ENCODE measurements at regions of chr2 and their contacts with region 1.

Region 1: DNA sequence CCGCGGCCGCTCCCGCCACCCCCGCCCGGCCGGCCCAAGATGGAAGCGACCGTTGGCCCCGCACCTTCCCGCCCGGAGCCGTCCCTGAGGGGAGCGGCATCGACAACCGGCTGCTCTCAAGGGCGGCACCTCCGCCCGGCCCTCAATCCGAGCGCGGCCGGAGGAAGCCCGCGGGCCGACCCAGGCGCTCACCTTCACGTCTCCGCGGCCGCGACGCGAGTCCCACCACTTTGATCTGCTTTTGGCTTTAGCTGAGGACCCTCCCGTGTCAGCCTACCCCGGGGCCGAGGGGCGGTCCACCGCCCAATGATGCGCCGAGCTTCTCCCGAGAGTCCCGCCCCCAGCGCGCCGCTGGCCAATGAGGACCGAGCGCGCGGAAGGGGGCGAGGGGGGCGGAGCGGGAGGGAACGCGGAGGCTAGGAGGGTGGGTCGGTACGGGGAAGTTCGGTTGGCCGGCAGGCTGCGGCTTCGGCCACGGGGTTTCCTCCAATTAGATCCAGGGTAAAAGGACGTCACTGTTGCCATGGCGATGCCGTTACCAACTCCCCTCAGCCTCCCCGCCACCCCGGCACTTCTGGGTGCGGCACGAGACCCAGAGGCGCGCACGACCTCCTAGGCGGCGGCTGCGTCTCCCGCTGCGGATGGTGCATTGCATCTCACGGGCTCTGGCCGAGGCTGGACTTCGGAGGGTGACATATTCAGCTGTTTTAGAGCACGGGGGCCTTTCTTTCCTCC is at the start of gene YWHAQ:
- DNase-seq: peak; percentile 97
- H3K4me3 Mint-ChIP-seq: peak within 1 kb of the TSS; percentile 97
- H3K27ac Mint-ChIP-seq: peak within 1 kb of the TSS; percentile 85
- H3K4me1 Mint-ChIP-seq: peaks cover 24% of the 10 kb centered on the region
- H3K27me3 Mint-ChIP-seq: no peaks in the 10 kb centered on the region
- CTCF ChIP-seq: no peak
- total RNA-seq, gene YWHAQ: 239 TPM in 2 replicates

Region 2: GRCh38 chr2:9440058-9440727 is 190.7 kb before region 1 on chr2:
- CTCF ChIA-PET with region 1: no interaction called
- POLR2A ChIA-PET with region 1: no interaction called
- intact Hi-C with region 1: no loop called
- DNase-seq: no peak
- H3K4me3 Mint-ChIP-seq: no peak overlapping the region
- H3K27ac Mint-ChIP-seq: no peak overlapping the region
- H3K4me1 Mint-ChIP-seq: no peaks in the 10 kb centered on the region
- H3K27me3 Mint-ChIP-seq: no peaks in the 10 kb centered on the region
- CTCF ChIP-seq: no peak

Region 3: DNA sequence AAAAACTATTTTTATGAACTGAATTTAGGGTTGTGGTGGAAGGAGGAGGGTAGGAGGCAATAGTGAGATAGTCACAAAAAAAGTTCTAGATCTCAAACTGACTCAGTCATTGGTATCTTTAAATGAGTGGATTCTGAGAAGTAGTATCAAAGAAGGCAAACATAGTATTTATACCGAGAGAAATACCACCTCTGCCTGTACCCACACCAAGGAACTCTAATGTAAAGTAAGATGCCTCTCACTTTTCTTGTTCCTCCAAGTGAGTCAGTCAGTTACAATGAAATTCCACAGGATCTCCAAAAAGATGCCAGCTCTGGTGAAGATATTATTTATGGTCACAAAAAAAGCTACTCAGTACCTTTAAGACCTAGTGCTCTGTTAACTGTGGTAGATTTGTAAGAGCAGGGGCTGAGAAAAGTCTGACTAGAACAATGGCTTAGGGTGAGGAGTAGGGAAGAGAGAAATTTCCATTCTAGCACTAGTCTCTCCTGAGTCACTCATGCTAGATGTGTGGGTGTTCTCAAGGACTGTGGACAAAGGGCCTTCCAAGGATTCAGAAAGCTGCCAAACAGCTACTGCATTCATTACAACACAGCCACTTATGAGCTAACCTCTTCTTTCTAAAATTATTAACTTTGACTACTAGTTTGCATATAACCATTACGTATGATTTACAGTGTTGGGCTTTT is 36.4 kb before region 1 on chr2:
- CTCF ChIA-PET with region 1: interaction called, 4 read pairs
- POLR2A ChIA-PET with region 1: interaction called, 12 read pairs
- intact Hi-C with region 1: no loop called
- DNase-seq: peak; percentile 89
- H3K4me3 Mint-ChIP-seq: no peak overlapping the region
- H3K27ac Mint-ChIP-seq: peak overlapping the region; percentile 55
- H3K4me1 Mint-ChIP-seq: peaks cover 21% of the 10 kb centered on the region
- H3K27me3 Mint-ChIP-seq: no peaks in the 10 kb centered on the region
- CTCF ChIP-seq: no peak

Region 4: DNA sequence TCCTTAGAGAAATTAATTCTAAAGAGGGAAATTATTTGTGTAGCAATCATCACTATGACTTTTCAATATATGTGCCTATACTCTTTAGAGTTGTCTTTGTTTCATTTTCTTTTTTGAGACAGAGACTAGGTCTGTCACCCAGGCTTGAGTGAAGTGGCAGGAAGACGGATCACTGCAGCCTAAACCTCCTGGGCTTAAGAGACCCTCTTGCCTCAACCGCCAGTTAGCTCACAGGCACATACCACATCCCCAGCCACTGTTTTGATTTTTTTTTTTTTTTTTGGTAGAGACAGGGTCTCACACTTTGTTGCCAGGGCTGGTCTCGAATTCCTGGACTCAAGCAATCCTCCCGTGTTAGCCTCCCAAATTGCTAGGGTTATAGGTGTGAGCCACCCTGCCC is 12.5 kb before region 1 on chr2:
- CTCF ChIA-PET with region 1: no interaction called
- POLR2A ChIA-PET with region 1: interaction called, 52 read pairs
- intact Hi-C with region 1: no loop called
- DNase-seq: no peak
- H3K4me3 Mint-ChIP-seq: no peak overlapping the region
- H3K27ac Mint-ChIP-seq: no peak overlapping the region
- H3K4me1 Mint-ChIP-seq: peaks cover 39% of the 10 kb centered on the region
- H3K27me3 Mint-ChIP-seq: no peaks in the 10 kb centered on the region
- CTCF ChIP-seq: no peak

Region 5: GRCh38 chr2:9692456-9693210 is 61.7 kb after region 1 on chr2:
- CTCF ChIA-PET with region 1: no interaction called
- POLR2A ChIA-PET with region 1: interaction called, 8 read pairs
- intact Hi-C with region 1: loop called (anchors 1 kb)
- DNase-seq: peak; percentile 64
- H3K4me3 Mint-ChIP-seq: peak overlapping the region; percentile 23
- H3K27ac Mint-ChIP-seq: no peak overlapping the region
- H3K4me1 Mint-ChIP-seq: peaks cover 9% of the 10 kb centered on the region
- H3K27me3 Mint-ChIP-seq: no peaks in the 10 kb centered on the region
- CTCF ChIP-seq: no peak

Region 6: GRCh38 chr2:9732824-9733223 is 101.9 kb after region 1 on chr2:
- CTCF ChIA-PET with region 1: no interaction called
- POLR2A ChIA-PET with region 1: no interaction called
- intact Hi-C with region 1: no loop called
- DNase-seq: no peak
- H3K4me3 Mint-ChIP-seq: no peak overlapping the region
- H3K27ac Mint-ChIP-seq: no peak overlapping the region
- H3K4me1 Mint-ChIP-seq: no peaks in the 10 kb centered on the region
- H3K27me3 Mint-ChIP-seq: no peaks in the 10 kb centered on the region
- CTCF ChIP-seq: no peak

Region 7: DNA sequence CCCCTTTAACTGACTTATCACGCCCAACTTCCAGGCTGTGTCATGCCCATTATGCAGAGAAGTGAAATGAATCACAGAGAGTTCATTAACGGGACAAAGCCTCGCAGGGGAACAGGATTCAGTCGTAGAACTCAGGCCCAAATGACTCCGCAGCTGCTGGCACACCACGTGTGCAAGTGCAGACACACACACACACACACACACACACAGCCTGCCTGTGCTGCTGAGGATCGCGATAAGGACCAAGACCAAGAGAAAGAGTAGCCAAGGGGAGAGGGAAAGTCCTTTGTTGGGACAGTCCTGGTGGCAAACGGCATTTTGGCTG is 122.3 kb after region 1 on chr2:
- CTCF ChIA-PET with region 1: no interaction called
- POLR2A ChIA-PET with region 1: interaction called, 38 read pairs
- intact Hi-C with region 1: loop called (anchors 1 kb)
- DNase-seq: peak; percentile 97
- H3K4me3 Mint-ChIP-seq: peak overlapping the region; percentile 69
- H3K27ac Mint-ChIP-seq: peak overlapping the region; percentile 82
- H3K4me1 Mint-ChIP-seq: peaks cover 36% of the 10 kb centered on the region
- H3K27me3 Mint-ChIP-seq: no peaks in the 10 kb centered on the region
- CTCF ChIP-seq: no peak

Region 8: GRCh38 chr2:9852881-9853280 is 222.0 kb after region 1 on chr2:
- CTCF ChIA-PET with region 1: no interaction called
- POLR2A ChIA-PET with region 1: no interaction called
- intact Hi-C with region 1: no loop called
- DNase-seq: no peak
- H3K4me3 Mint-ChIP-seq: no peak overlapping the region
- H3K27ac Mint-ChIP-seq: no peak overlapping the region
- H3K4me1 Mint-ChIP-seq: peaks cover 3% of the 10 kb centered on the region
- H3K27me3 Mint-ChIP-seq: no peaks in the 10 kb centered on the region
- CTCF ChIP-seq: no peak

Measured in MCF 10A (cell line).